GM12878 (cell line): ENCODE measurements at regions of chr15 and their contacts with region 1.

Region 1: GRCh38 chr15:85318048-85318731 is 62.2 kb upstream of the AKAP13 start:
- DNase-seq: peak; percentile 83
- ATAC-seq: peak; percentile 97
- H3K4me3 ChIP-seq: no peak overlapping the region
- H3K27ac ChIP-seq: peak overlapping the region; percentile 60
- H3K4me1 ChIP-seq: peaks cover 32% of the 10 kb centered on the region
- H3K27me3 ChIP-seq: no peaks in the 10 kb centered on the region
- CTCF ChIP-seq: peak in 2 of 3 experiments; percentile 19 to 28; a peak in 2 of 6 replicates
- EP300 ChIP-seq: peak; percentile 96 to 97
- POLR2A ChIP-seq: no peak
- RAD21 ChIP-seq: peak; percentile 45

Region 2: DNA sequence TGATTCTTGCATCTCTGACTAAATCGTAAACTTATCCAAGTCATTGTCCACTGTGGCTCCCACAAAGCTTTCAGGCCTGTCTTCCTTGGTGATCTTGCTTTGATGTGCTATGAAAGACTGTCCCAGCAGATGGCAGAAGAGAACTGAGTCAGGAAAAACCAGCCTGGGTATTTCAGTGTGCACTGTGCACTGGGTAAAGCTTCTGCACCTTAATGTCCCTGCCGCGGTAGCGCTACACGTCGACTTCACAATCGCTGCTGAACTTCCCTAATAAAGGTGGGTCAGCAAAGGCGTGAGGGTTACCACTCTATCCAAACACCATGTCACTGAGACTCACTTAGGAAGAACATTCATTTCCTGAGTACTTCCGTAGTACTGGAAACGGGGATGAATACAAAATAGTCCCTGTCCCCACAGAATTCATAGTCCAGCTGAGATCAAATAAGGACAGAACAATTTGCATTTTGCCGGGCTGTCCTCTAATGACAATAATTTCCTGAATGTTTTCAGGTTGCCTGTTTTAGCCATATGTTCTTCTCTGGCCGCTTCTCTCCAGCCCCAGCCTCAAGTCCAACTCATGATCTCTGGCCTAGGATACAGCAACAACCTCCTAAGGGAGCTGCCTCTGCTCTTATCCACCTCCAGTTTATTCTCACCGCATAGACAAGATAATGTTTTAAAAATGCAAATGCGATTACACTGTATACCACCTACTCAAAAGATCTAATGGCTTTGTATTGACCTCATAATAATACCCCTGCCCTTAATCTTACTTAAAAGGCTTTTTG is 21.4 kb before region 1 on chr15:
- CTCF ChIA-PET with region 1: interaction called, 23 read pairs
- POLR2A ChIA-PET with region 1: interaction called, 3 read pairs
- RAD21 ChIA-PET with region 1: interaction called, 15 read pairs
- SMC1A ChIA-PET with region 1: interaction called, 18 read pairs
- in situ Hi-C with region 1: no loop called
- intact Hi-C with region 1: no loop called
- DNase-seq: peak; percentile 68
- ATAC-seq: peak; percentile 98
- H3K4me3 ChIP-seq: no peak overlapping the region
- H3K27ac ChIP-seq: no peak overlapping the region
- H3K4me1 ChIP-seq: no peaks in the 10 kb centered on the region
- H3K27me3 ChIP-seq: no peaks in the 10 kb centered on the region; a peak in 1 of 4 replicates
- CTCF ChIP-seq: peak; percentile 76 to 79 (median 77)
- EP300 ChIP-seq: no peak
- POLR2A ChIP-seq: no peak
- RAD21 ChIP-seq: peak; percentile 97

Region 3: DNA sequence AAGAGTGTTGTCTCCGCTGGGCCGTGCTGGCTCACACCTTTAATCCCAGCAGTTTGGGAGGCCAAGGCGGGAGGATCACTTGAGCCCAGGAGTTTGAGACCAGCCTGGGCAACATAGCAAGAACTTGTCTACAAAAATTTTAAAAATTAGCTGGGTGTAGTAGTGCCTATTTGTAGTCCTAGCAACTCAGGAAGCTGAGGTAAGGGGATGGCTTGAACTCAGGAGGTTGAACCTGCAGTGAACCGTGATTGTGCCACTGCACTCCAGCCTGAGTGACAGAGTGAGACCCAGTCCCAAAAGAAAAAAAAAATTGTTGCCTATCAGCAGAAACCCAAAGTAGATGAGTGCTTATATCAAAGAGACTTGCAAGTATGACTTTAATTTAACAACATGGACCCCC is 49.6 kb after region 1 on chr15:
- CTCF ChIA-PET with region 1: interaction called, 3 read pairs
- POLR2A ChIA-PET with region 1: no interaction called
- RAD21 ChIA-PET with region 1: no interaction called
- SMC1A ChIA-PET with region 1: no interaction called
- in situ Hi-C with region 1: no loop called
- intact Hi-C with region 1: loop called (anchors 5 kb)
- DNase-seq: no peak
- ATAC-seq: no peak
- H3K4me3 ChIP-seq: no peak overlapping the region
- H3K27ac ChIP-seq: no peak overlapping the region
- H3K4me1 ChIP-seq: peaks cover under 1% of the 10 kb centered on the region; the same call in 1 of the 2 replicates
- H3K27me3 ChIP-seq: no peaks in the 10 kb centered on the region
- CTCF ChIP-seq: no peak
- EP300 ChIP-seq: no peak
- POLR2A ChIP-seq: no peak
- RAD21 ChIP-seq: no peak

Region 4: DNA sequence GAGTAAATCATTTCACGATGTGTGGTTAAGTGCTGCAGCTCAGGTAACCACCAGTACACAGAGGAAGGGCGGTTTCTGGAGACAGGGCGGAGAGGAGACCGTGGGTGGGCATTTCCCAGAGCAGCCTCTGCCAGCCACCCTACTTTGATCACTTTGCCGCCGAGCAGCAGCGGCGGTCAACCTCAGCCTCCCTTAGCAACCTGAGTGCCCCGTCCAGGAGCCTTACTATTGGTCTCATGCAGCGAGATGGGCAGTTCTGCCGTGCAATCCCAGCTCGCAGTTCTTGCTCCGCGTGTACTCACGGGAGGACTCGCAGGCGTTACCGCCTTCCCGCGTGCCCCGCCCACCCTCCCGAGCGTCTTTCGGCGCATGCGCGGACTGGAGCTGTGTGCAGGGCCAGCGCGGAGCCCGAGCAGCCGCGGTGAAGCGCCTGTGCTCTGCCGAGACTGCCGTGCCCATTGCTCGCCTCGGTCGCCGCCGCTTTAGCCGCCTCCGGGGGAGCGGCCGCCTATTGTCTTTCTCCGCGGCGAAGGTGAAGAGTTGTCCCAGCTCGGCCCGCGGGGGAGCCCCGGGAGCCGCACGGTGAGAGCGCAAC is 62.1 kb after region 1 on chr15 and contains the start of gene AKAP13:
- CTCF ChIA-PET with region 1: interaction called, 10 read pairs
- POLR2A ChIA-PET with region 1: interaction called, 6 read pairs
- RAD21 ChIA-PET with region 1: interaction called, 12 read pairs
- SMC1A ChIA-PET with region 1: interaction called, 7 read pairs
- in situ Hi-C with region 1: no loop called
- intact Hi-C with region 1: loop called (anchors 5 kb)
- DNase-seq: peak; percentile 98
- ATAC-seq: peak; percentile 89
- H3K4me3 ChIP-seq: peak within 1 kb of the TSS; percentile 80
- H3K27ac ChIP-seq: peak within 1 kb of the TSS; percentile 78
- H3K4me1 ChIP-seq: peaks cover 12% of the 10 kb centered on the region; the same call in 1 of the 2 replicates
- H3K27me3 ChIP-seq: no peaks in the 10 kb centered on the region; a peak in 2 of 4 replicates
- CTCF ChIP-seq: no peak
- EP300 ChIP-seq: no peak
- POLR2A ChIP-seq: peak; percentile 88
- RAD21 ChIP-seq: no peak
- polyA plus RNA-seq, gene AKAP13: 14.4 to 21.5 TPM

Region 5: GRCh38 chr15:85475317-85475701 is 157.1 kb after region 1 on chr15:
- CTCF ChIA-PET with region 1: interaction called, 7 read pairs
- POLR2A ChIA-PET with region 1: no interaction called
- RAD21 ChIA-PET with region 1: interaction called, 9 read pairs
- SMC1A ChIA-PET with region 1: interaction called, 10 read pairs
- in situ Hi-C with region 1: no loop called
- intact Hi-C with region 1: no loop called
- DNase-seq: peak; percentile 85
- ATAC-seq: peak; percentile 89
- H3K4me3 ChIP-seq: peak overlapping the region; percentile 39; the same call in 1 of the 2 replicates
- H3K27ac ChIP-seq: peak overlapping the region; percentile 90
- H3K4me1 ChIP-seq: peaks cover 42% of the 10 kb centered on the region
- H3K27me3 ChIP-seq: no peaks in the 10 kb centered on the region
- CTCF ChIP-seq: no peak
- EP300 ChIP-seq: peak; percentile 26 to 44; a peak in 1 of 4 replicates
- POLR2A ChIP-seq: no peak
- RAD21 ChIP-seq: 0 out of 2 replicates have a peak, but pooled peaks have one; percentile 8

Region 6: GRCh38 chr15:85702321-85703101 is 384.3 kb after region 1 on chr15:
- CTCF ChIA-PET with region 1: no interaction called
- POLR2A ChIA-PET with region 1: no interaction called
- RAD21 ChIA-PET with region 1: no interaction called
- SMC1A ChIA-PET with region 1: no interaction called
- in situ Hi-C with region 1: loop called (anchors 5 kb)
- intact Hi-C with region 1: loop called (anchors 10 kb)
- DNase-seq: no peak
- ATAC-seq: peak; percentile 42
- H3K4me3 ChIP-seq: peak overlapping the region; percentile 45; the same call in 1 of the 2 replicates
- H3K27ac ChIP-seq: peak overlapping the region; percentile 99
- H3K4me1 ChIP-seq: peaks cover 56% of the 10 kb centered on the region
- H3K27me3 ChIP-seq: no peaks in the 10 kb centered on the region
- CTCF ChIP-seq: no peak
- EP300 ChIP-seq: no peak; a peak in 1 of 4 replicates
- POLR2A ChIP-seq: 0 out of 2 replicates have a peak, but pooled peaks have one; percentile 27
- RAD21 ChIP-seq: no peak

Region 7: DNA sequence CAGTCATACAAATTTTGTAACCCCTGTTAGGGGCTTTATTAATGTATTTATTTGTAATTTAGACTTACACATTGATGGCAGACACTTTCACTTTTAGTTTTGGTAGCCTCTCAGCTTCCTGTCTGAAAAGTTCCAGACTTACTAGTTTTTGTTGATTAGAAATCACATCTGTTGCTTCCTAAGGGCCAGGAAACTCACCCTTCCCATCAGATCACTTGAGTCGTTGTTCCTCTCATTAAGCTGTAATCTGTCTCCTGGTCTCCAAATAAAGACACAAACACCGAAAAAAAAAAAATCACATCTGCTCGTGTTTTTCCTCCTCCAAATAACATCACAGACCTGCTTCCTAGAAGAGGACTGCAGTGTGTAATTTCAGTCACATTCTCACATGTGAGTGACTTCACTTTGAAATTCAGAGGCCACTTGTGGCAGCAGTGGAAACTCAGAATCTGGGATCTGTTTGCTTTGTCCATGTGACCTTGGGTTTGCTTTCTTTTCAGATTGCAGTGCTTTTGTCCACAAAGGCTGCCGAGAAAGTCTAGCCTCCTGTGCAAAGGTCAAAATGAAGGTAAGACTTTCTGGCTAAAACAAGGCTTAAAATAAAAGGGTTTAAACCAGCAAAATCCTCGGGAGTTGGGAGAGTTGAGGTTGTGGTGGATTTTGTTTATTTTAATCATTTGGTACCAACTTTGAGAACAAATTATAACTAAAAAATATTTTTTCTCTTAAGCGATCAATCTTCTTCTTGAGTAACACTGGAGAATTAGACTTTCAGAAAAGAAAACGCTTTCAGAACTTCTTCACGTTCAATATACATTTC is 389.5 kb after region 1 on chr15:
- CTCF ChIA-PET with region 1: no interaction called
- POLR2A ChIA-PET with region 1: no interaction called
- RAD21 ChIA-PET with region 1: interaction called, 6 read pairs
- SMC1A ChIA-PET with region 1: no interaction called
- in situ Hi-C with region 1: loop called (anchors 5 kb)
- intact Hi-C with region 1: loop called (anchors 10 kb)
- DNase-seq: no peak
- ATAC-seq: peak; percentile 5
- H3K4me3 ChIP-seq: peak overlapping the region; percentile 60
- H3K27ac ChIP-seq: peak overlapping the region; percentile 99
- H3K4me1 ChIP-seq: peaks cover 66% of the 10 kb centered on the region
- H3K27me3 ChIP-seq: no peaks in the 10 kb centered on the region
- CTCF ChIP-seq: no peak
- EP300 ChIP-seq: no peak
- POLR2A ChIP-seq: no peak
- RAD21 ChIP-seq: no peak